Heart left ventricle (tissue), 16 donors: ENCODE measurements at regions of chr16 and their contacts with region 1.

Region 1: GRCh38 chr16:86563489-86564345 is 2.9 kb upstream of the FOXC2 start:
- DNase-seq: peak; percentile 83 to 91 (median 87)
- ATAC-seq: peak; percentile 64 to 77 (median 69)
- H3K4me3 ChIP-seq: peak overlapping the region in 10 of 12 donors; percentile 1 to 50 (median 20)
- H3K27ac ChIP-seq: peak overlapping the region in 3 of 12 donors; percentile 8 to 58 (median 29)
- H3K4me1 ChIP-seq: peaks cover 0 to 25% (median 9%) of the 10 kb centered on the region in 12 donors
- H3K27me3 ChIP-seq: peaks cover 17 to 69% (median 43%) of the 10 kb centered on the region in 9 donors
- CTCF ChIP-seq: peak; percentile 100
- POLR2A ChIP-seq: peak in 1 of 2 donors; percentile 12

Region 2: DNA sequence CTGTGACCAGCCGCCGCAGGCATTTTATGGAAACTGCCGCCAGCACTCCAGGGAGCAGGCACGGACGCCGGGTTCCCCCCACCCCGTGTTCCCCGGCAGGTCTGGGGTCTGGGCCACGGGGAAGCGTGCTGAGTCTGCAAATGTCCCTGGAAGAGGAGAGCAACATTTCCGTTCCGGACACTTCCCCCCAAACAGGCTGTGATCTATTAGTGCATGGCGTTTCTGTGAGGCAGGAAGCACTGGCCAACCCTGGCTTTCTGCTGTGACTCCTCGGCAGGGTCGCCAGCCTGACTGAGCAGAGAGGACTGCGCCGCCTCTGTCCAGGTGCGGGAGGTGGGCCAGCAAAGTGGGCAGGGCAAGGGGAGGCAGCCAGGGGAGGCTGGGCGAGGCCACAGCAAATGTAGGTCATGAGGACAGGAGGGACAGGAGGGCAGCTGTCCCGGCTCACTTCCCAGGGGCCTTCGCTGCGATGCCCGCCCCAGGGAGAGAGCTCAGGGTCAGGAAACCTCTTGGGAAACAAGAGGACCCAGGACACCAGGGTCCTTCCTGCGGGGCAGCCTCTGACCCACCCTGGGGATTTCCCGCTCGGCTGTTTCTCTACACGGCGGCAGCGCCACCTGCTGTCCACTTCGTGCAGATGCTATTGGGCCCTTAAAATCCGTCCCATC is 43.9 kb before region 1 on chr16:
- intact Hi-C with region 1: no loop called
- DNase-seq: peak; percentile 29 to 85 (median 57)
- ATAC-seq: peak; percentile 11 to 53 (median 47)
- H3K4me3 ChIP-seq: peak overlapping the region in 3 of 12 donors; percentile 1 to 16 (median 8)
- H3K27ac ChIP-seq: peak overlapping the region in 1 of 12 donors; percentile 17
- H3K4me1 ChIP-seq: peaks cover 0 to 27% (median 10%) of the 10 kb centered on the region in 12 donors
- H3K27me3 ChIP-seq: peaks cover 30 to 94% (median 75%) of the 10 kb centered on the region in 9 donors
- CTCF ChIP-seq: peak; percentile 85 to 97 (median 92)
- POLR2A ChIP-seq: no peak

Region 3: GRCh38 chr16:86751076-86752030 is 187.6 kb after region 1 on chr16:
- intact Hi-C with region 1: loop called in 1 of 10 experiments (anchors 5 kb)
- DNase-seq: no peak
- ATAC-seq: no peak
- H3K4me3 ChIP-seq: no peak overlapping the region
- H3K27ac ChIP-seq: no peak overlapping the region
- H3K4me1 ChIP-seq: peaks cover 0 to 11% (median 0%) of the 10 kb centered on the region in 12 donors
- H3K27me3 ChIP-seq: peaks cover 0 to 3% (median 0%) of the 10 kb centered on the region in 9 donors
- CTCF ChIP-seq: no peak
- POLR2A ChIP-seq: no peak

Region 4: DNA sequence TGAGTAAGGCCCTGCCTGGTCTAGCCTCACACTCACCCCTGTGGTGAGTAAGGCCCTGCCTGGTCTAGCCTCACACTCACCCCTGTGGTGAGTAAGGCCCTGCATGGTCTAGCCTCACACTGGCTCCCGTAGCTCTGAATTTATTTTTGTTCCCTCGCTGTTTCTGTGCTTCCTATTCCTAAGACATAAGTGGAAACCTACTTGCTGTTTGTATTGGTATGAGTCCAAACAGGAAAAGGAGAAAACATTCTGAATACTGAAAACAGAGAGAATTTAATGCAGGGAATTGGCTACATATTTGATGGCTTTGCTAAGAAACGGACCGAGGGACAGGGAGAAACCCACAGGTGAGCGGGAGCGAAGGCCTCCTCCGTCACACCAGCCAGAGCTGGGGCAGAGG is 282.4 kb after region 1 on chr16:
- intact Hi-C with region 1: no loop called
- DNase-seq: no peak
- ATAC-seq: no peak
- H3K4me3 ChIP-seq: no peak overlapping the region
- H3K27ac ChIP-seq: no peak overlapping the region
- H3K4me1 ChIP-seq: peaks cover 0 to 6% (median 0%) of the 10 kb centered on the region in 12 donors
- H3K27me3 ChIP-seq: no peaks in the 10 kb centered on the region
- CTCF ChIP-seq: no peak
- POLR2A ChIP-seq: no peak

Region 5: DNA sequence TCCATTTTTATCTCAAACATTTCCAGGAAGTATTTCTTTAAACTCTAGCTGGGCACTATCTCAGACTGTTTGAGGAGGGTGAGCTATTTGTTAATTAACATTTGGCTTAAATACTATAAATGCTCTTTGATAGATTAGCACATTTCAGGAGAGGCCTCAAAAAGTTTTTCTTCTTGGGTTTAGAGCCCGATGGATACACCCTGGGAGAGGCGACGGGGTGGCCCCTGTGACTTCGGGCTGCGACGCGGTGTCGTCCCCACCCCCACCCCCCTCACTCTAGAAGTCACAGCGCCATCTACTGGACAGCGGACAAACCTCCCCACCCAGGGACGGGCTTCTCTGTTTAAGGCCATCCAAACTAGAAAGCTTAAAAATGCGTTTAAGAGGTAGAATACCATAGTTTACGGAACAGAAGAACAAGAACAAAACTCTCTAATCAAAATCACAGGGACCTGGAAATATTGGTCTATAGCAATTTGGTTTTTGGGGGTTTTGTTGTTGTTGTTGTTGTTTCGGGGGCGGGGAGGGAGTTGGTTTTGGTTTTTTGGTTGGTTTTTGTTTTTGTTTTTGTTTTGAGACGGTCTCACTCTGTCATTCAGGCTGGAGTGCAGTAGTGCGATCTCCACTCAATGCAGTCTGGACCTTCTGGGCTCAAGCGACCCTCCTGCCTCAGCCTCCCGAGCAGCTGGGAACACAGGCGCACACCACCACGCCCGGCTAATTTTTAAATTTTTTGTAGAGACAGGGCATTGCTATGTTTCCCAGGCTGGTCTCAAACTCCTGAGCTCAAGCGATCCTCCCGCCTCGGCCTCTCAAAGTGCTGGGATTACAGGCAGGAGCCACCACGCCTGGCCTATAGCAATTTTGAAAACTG is 499.1 kb after region 1 on chr16:
- intact Hi-C with region 1: loop called (anchors 1 to 5 kb)
- DNase-seq: peak; percentile 66 to 82 (median 74)
- ATAC-seq: peak; percentile 88 to 93 (median 91)
- H3K4me3 ChIP-seq: peak overlapping the region in 6 of 12 donors; percentile 6 to 47 (median 22)
- H3K27ac ChIP-seq: no peak overlapping the region
- H3K4me1 ChIP-seq: peaks cover 0 to 7% (median 0%) of the 10 kb centered on the region in 12 donors
- H3K27me3 ChIP-seq: peaks cover 0 to 17% (median 7%) of the 10 kb centered on the region in 9 donors
- CTCF ChIP-seq: peak; percentile 70 to 85 (median 80)
- POLR2A ChIP-seq: no peak

Region 6: DNA sequence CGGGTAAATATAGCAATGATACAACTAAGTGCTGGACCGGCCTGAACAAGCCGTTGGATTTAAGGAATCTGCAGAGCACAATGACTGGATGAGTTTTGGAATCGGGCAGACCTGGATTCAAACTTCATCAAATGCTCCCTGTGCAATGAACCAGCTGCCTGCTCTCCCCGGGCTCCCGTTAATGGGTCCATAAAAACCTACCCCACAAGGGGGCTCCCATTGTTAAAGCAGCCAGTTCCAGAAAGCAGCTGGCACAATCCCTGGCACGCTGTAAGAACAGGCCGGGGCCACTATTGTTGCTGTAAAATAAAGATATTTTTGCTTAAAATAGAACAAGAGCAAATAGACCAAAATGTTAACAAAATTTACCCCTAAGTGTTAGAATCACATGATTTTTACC is 621.6 kb after region 1 on chr16:
- intact Hi-C with region 1: loop called in 1 of 10 experiments (anchors 10 kb)
- DNase-seq: no peak
- ATAC-seq: no peak
- H3K4me3 ChIP-seq: no peak overlapping the region
- H3K27ac ChIP-seq: no peak overlapping the region
- H3K4me1 ChIP-seq: no peaks in the 10 kb centered on the region
- H3K27me3 ChIP-seq: no peaks in the 10 kb centered on the region
- CTCF ChIP-seq: no peak
- POLR2A ChIP-seq: no peak

Region 7: GRCh38 chr16:87297918-87298631 is 734.4 kb after region 1 on chr16:
- intact Hi-C with region 1: loop called in 2 of 10 experiments (anchors 1 to 5 kb)
- DNase-seq: no peak
- ATAC-seq: peak in 2 of 4 donors; percentile 52 to 63
- H3K4me3 ChIP-seq: no peak overlapping the region
- H3K27ac ChIP-seq: no peak overlapping the region
- H3K4me1 ChIP-seq: peaks cover 0 to 4% (median 0%) of the 10 kb centered on the region in 12 donors
- H3K27me3 ChIP-seq: no peaks in the 10 kb centered on the region
- CTCF ChIP-seq: peak; percentile 30 to 67 (median 55)
- POLR2A ChIP-seq: no peak